K562 (cell line): ENCODE measurements at regions of chr9 and their contacts with region 1.

Region 1: GRCh38 chr9:37582548-37583157 is 6.5 kb upstream of the FBXO10 start:
- DNase-seq: peak in 2 of 4 experiments; percentile 32 to 57
- ATAC-seq: peak; percentile 79
- H3K4me3 ChIP-seq: no peak overlapping the region
- H3K27ac ChIP-seq: no peak overlapping the region
- H3K4me1 ChIP-seq: peaks cover 0 to 7% of the 10 kb centered on the region in 2 experiments; a peak in 1 of 5 replicates
- H3K27me3 ChIP-seq: no peaks in the 10 kb centered on the region
- CTCF ChIP-seq: peak; percentile 40 to 80 (median 65); a peak in 5 of 6 replicates
- EP300 ChIP-seq: no peak
- POLR2A ChIP-seq: 0 out of 2 replicates have a peak, but pooled peaks have one; percentile 31
- RAD21 ChIP-seq: peak; percentile 66 to 81

Region 2: DNA sequence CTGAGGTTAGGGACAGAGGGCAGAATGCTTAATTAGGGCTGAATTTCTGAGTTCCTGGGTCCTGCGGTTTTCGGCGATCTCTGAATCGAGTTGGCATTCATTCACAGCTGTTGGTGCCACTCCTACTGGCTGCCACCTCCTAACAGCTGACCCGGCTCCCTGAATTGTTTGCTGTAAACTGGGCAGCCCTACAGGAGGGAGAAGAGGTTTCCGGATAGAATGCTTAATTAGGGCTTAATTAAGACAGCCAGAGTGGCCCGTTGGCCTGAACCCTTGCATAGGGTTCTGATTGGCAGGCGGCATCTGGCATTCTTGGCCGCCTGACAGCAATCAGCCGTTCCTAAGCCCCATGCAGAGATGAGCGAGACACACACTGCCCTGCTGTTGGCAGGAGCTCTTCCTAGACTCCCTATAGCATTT is 93.8 kb after region 1 on chr9:
- CTCF ChIA-PET with region 1: no interaction called
- POLR2A ChIA-PET with region 1: no interaction called
- in situ Hi-C with region 1: no loop called
- intact Hi-C with region 1: loop called (anchors 5 kb)
- DNase-seq: no peak
- ATAC-seq: no peak
- H3K4me3 ChIP-seq: no peak overlapping the region
- H3K27ac ChIP-seq: no peak overlapping the region
- H3K4me1 ChIP-seq: peaks cover 3 to 5% of the 10 kb centered on the region in 2 experiments; a peak in 2 of 5 replicates
- H3K27me3 ChIP-seq: peaks cover 47% of the 10 kb centered on the region in 2 experiments
- CTCF ChIP-seq: no peak
- EP300 ChIP-seq: no peak
- POLR2A ChIP-seq: no peak
- RAD21 ChIP-seq: no peak